Ovary (tissue), 10 donors: ENCODE measurements at regions of chr3 and their contacts with region 1.

Region 1: DNA sequence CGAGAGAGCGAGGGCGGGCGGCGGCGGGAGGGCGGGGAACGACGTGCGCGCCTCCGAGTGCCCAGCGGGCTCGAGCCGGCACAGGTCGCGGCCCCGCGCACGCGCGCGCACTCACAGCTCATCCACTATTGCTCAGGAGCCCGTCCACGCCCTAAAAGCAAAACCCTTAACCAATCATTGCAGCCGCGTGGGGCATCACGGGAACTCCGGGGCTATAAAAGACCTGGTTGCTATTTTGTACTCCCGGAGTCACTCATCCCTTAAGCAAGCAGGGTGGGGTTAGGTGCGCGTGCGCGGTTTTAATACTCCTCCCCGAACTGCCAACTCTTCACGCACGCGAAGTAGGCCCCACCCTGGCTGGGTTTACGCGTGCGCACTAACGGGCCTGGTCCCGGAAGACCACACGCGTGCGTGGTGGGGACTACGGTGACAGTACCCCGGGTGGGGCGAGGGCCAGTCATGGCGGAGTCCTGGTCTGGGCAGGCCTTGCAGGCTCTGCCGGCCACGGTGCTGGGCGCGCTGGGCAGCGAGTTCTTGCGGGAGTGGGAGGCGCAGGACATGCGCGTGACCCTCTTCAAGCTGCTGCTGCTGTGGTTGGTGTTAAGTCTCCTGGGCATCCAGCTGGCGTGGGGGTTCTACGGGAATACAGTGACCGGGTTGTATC is at the starts of genes RHOA and TCTA:
- DNase-seq: peak; percentile 98 to 99 (median 99)
- H3K4me3 ChIP-seq: peak within 1 kb of the TSS; percentile 84
- H3K27ac ChIP-seq: peak within 1 kb of the TSS; percentile 91 to 98
- H3K4me1 ChIP-seq: peaks cover 11% of the 10 kb centered on the region
- H3K27me3 ChIP-seq: no peaks in the 10 kb centered on the region
- CTCF ChIP-seq: no peak
- EP300 ChIP-seq: peak; percentile 66
- POLR2A ChIP-seq: peak; percentile 82
- total RNA-seq, gene RHOA: 293 to 563 (median 439) TPM
- total RNA-seq, gene TCTA: 22.4 to 46.6 (median 28.3) TPM

Region 2: GRCh38 chr3:49358217-49358883 is 53.8 kb before region 1 on chr3 and contains the start of gene GPX1:
- intact Hi-C with region 1: loop called in 1 of 4 experiments (anchors 5 kb)
- DNase-seq: peak; percentile 94 to 96 (median 95)
- H3K4me3 ChIP-seq: peak within 1 kb of the TSS; percentile 71
- H3K27ac ChIP-seq: peak within 1 kb of the TSS; percentile 10 to 73
- H3K4me1 ChIP-seq: peaks cover 4% of the 10 kb centered on the region
- H3K27me3 ChIP-seq: no peaks in the 10 kb centered on the region
- CTCF ChIP-seq: no peak
- EP300 ChIP-seq: no peak
- POLR2A ChIP-seq: peak; percentile 80
- total RNA-seq, gene GPX1: 114 to 207 (median 152) TPM

Region 3: DNA sequence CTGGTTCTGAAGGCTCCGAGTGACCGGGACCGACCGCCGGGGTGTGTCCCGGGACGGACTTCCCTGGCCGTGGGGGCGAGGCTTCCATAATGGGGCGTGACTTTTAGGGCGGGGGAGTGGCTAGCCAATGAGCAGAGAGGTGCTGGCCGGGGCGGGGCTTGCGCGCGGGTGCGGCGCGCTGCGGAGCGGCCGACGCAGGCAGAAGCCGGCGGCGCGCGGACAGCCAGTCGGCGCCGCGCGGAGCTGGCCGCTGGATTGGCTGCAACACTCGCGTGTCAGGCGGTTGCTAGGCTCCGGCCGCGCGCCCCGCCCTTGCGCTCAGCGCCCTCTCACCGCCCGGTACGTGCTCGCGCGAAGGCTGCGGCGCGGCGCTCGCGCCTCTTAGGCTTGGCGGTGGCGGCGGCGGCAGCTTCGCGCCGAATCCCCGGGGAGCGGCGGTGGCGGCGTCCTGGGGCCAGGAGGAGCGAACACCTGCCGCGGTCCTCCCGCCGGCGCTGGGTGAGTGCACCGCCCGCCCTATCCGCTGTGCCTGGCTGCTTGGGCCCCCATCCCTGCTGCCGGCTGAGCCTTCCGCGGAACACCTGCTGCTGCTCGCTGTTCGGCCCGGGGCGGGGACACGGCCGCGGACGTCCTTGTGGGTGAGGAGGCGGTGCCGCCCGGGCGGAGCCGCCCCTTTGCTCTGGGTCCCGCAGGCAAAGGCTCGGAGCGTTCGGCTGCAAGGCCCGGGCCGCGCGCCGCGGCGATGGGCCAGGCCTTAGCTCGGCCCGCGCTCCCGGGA is 58.0 kb after region 1 on chr3 and contains the start of gene DAG1:
- intact Hi-C with region 1: loop called in 1 of 4 experiments (anchors 10 kb)
- DNase-seq: peak; percentile 99
- H3K4me3 ChIP-seq: peak within 1 kb of the TSS; percentile 92
- H3K27ac ChIP-seq: peak within 1 kb of the TSS; percentile 78 to 98
- H3K4me1 ChIP-seq: peaks cover 18% of the 10 kb centered on the region
- H3K27me3 ChIP-seq: no peaks in the 10 kb centered on the region
- CTCF ChIP-seq: peak in 2 of 3 donors; percentile 30 to 41
- EP300 ChIP-seq: no peak
- POLR2A ChIP-seq: peak; percentile 68
- total RNA-seq, gene DAG1: 22.1 to 90.7 (median 61.8) TPM